GM12878 (cell line): ENCODE measurements at regions of chr18 and their contacts with region 1.

Region 1: DNA sequence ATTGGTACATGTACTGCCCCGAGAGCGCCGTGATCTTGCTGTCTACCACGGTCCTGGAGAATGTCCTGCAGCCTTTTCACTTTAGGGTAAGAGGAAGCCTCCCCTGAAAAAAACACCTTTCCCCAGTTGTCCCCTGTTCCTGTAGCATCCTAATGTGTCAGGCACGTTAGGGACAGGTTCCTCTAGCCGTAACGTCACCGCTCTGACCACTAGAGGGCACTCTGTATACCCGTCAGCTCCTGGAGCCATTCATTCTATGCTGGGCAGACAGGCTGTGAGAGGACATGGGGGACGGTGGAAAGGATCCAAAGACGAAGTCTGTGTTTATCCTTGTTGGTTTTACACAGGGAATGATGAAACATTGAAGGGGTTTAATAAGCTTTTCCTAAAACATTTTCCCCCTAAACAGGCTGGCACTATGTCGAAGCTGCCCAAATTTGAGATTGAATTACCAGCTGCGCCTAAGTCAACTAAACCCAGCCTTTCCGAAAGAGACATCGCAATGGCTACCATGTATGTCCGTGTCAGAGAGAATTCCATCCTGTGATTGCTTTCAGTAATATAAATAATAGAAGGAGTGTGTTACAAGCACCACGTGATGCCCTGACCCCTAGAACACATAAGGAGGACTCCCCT is 12.7 kb downstream of the RMC1 start:
- DNase-seq: peak; percentile 39
- ATAC-seq: peak; percentile 99
- H3K4me3 ChIP-seq: no peak overlapping the region
- H3K27ac ChIP-seq: no peak overlapping the region
- H3K4me1 ChIP-seq: peaks cover 3% of the 10 kb centered on the region; the same call in 1 of the 2 replicates
- H3K27me3 ChIP-seq: no peaks in the 10 kb centered on the region
- CTCF ChIP-seq: peak; percentile 89 to 97 (median 94)
- EP300 ChIP-seq: no peak
- POLR2A ChIP-seq: no peak
- RAD21 ChIP-seq: peak; percentile 76

Region 2: DNA sequence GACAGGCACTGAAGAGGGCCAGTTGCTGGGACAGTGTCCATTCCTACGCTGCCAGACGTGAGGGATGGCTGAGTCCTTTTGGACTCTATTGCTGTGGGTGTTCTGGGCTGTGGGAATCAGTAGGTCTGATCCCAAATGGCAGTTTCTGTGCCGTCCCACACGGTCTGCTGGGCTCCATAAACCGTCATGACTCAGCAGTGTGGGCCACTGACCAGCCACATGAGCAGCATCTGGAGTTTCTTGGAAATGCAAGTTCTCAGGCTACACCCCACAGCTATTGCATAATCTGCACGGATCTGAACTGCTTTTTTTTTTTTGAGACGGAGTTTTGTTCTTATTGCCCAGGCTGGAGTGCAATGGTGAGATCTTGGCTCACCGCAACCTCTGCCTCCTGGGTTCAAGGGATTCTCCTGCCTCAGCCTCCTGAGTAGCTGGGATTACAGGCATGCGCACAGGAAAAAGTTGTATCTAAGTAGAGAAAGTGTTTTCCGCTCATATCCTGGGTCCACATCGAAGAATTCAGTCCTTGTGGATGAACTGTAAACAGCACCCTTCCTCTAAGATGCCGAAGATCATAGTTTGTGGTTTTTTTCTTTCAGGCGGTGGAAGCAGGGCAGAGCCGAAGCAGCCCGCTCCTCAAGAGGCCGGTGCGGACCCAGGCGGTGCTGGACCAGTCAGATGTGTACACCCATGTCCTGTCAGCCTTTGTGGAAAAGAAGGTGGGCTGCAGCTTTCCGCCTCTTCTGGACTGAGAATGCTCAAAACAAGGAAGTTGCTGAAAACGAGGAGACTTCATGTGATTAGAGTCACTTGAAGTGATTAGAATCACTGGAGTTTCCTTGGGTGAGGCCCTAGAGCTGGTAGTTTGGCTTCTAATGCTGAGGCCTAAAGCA is 12.8 kb after region 1 on chr18:
- CTCF ChIA-PET with region 1: interaction called, 15 read pairs
- POLR2A ChIA-PET with region 1: no interaction called
- RAD21 ChIA-PET with region 1: no interaction called
- SMC1A ChIA-PET with region 1: interaction called, 4 read pairs
- in situ Hi-C with region 1: no loop called
- intact Hi-C with region 1: no loop called
- DNase-seq: no peak
- ATAC-seq: no peak
- H3K4me3 ChIP-seq: no peak overlapping the region
- H3K27ac ChIP-seq: no peak overlapping the region
- H3K4me1 ChIP-seq: peaks cover 3% of the 10 kb centered on the region
- H3K27me3 ChIP-seq: no peaks in the 10 kb centered on the region
- CTCF ChIP-seq: no peak
- EP300 ChIP-seq: no peak
- POLR2A ChIP-seq: no peak
- RAD21 ChIP-seq: no peak

Region 3: GRCh38 chr18:23578891-23579653 is 63.0 kb after region 1 on chr18:
- CTCF ChIA-PET with region 1: interaction called, 27 read pairs
- POLR2A ChIA-PET with region 1: no interaction called
- RAD21 ChIA-PET with region 1: interaction called, 4 read pairs
- SMC1A ChIA-PET with region 1: interaction called, 20 read pairs
- in situ Hi-C with region 1: loop called (anchors 5 kb)
- intact Hi-C with region 1: no loop called
- DNase-seq: no peak
- ATAC-seq: no peak
- H3K4me3 ChIP-seq: no peak overlapping the region
- H3K27ac ChIP-seq: no peak overlapping the region
- H3K4me1 ChIP-seq: peaks cover 24% of the 10 kb centered on the region
- H3K27me3 ChIP-seq: no peaks in the 10 kb centered on the region
- CTCF ChIP-seq: no peak
- EP300 ChIP-seq: no peak
- POLR2A ChIP-seq: no peak
- RAD21 ChIP-seq: no peak

Region 4: DNA sequence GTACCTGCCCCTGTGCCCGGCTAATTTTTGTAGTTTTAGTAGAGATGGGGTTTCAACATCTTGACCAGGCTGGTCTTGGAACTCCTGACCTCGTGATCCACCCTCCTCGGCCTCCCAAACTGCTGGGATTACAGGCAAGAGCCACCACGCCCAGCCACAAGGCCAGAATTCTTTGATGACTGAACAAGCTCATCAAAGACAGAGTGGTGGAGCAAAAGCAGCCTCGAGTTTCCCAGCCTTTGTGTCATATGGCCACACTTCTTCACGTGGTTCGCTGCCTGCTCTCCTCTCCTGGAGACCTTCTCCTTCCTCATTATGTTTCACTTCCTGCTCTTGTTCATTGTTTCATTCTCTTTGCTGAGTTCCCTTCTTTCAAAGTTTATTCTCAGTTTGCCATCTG is 80.2 kb after region 1 on chr18:
- CTCF ChIA-PET with region 1: interaction called, 11 read pairs
- POLR2A ChIA-PET with region 1: no interaction called
- RAD21 ChIA-PET with region 1: no interaction called
- SMC1A ChIA-PET with region 1: interaction called, 5 read pairs
- in situ Hi-C with region 1: no loop called
- intact Hi-C with region 1: no loop called
- DNase-seq: no peak
- ATAC-seq: no peak
- H3K4me3 ChIP-seq: no peak overlapping the region
- H3K27ac ChIP-seq: no peak overlapping the region
- H3K4me1 ChIP-seq: no peaks in the 10 kb centered on the region
- H3K27me3 ChIP-seq: no peaks in the 10 kb centered on the region
- CTCF ChIP-seq: no peak
- EP300 ChIP-seq: no peak
- POLR2A ChIP-seq: no peak
- RAD21 ChIP-seq: no peak

Region 5: DNA sequence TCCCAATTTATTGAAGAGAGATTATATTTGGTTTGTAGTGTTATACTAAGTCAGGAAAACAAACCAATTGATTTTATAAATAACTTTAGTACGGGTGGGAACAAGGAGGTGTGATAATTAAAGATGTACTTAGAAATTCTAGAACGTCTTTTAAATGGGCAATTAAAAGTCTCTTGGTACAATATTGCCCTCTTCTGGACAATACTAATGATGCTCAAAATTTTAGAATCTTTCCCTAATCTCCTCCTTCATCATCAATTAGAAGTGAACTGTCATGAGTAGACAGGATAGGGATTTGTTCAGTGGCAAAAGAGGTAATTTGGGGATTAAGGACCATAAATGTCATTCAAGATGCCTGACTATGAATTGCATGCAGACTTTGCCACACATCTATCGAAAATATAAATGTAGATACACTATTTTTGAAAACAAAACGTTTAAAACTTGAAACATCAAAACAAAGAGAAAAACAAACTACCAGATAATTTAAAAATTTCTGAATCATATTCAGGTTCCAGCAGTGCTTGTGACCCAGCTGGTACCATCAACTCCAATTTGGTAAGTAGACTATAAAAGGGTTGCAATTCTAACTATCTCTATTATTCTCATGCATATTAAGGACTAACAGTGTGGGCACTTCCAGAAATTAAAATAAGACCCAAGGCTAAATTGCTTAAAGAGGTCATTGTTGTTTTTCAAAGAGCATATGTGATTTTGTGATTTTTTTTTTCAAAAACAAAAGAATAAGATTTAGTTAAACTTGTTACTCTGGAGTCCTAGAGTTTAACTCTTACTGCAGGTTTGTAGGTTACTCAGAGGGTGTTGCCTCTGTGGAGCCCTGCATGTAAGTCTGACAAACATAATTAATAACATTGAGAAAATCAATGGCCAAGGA is 296.8 kb after region 1 on chr18:
- CTCF ChIA-PET with region 1: interaction called, 11 read pairs
- POLR2A ChIA-PET with region 1: no interaction called
- RAD21 ChIA-PET with region 1: interaction called, 3 read pairs
- SMC1A ChIA-PET with region 1: interaction called, 3 read pairs
- in situ Hi-C with region 1: no loop called
- intact Hi-C with region 1: loop called (anchors 5 kb)
- DNase-seq: no peak
- ATAC-seq: no peak
- H3K4me3 ChIP-seq: no peak overlapping the region
- H3K27ac ChIP-seq: no peak overlapping the region
- H3K4me1 ChIP-seq: peaks cover 15% of the 10 kb centered on the region
- H3K27me3 ChIP-seq: no peaks in the 10 kb centered on the region; a peak in 1 of 4 replicates
- CTCF ChIP-seq: peak; percentile 30 to 53 (median 38); a peak in 3 of 6 replicates
- EP300 ChIP-seq: no peak
- POLR2A ChIP-seq: no peak
- RAD21 ChIP-seq: peak; percentile 67